GM12878 (cell line): ENCODE measurements at regions of chr2 and their contacts with region 1.

Region 1: DNA sequence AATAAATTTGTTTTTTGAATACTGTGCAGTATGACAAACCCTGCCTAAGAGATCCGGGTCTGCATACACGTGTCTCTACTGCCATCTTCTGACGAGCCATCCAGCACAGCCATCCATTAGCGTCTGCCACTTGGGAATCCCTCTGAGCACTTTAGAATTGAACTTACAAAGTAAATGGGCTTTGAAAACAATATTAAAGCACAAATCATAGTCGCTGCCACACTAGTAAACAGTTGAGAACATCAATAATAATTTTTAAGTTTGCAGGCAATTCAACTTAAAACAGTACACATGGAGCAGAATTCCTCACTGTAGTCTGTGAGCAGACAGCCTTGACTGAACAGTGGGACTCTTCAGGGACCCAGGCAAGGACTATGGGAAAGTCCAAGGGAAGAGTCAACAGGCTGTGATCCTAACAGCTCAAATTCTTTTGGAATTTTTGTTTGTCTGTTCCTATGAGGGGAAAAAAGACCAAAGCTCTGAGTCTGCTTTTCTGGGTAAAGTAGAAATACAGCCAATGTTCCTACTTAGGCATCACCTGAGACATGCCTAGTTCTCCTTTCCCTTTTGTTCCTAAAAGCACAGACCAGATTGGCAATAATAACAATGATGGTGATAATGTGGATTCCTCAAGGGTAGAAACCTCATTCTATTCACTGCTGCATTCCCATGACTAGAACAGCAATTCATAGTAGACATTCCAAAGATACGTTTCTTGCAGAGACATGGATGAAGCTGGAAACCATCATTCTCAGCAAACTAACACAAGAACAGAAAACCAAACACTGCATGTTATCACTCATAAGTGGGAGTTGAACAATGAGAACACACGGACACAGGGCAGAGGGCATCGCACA is 92.9 kb downstream of the MREG start:
- DNase-seq: no peak
- ATAC-seq: peak; percentile 75
- H3K4me3 ChIP-seq: no peak overlapping the region
- H3K27ac ChIP-seq: no peak overlapping the region
- H3K4me1 ChIP-seq: peaks cover 25% of the 10 kb centered on the region
- H3K27me3 ChIP-seq: no peaks in the 10 kb centered on the region
- CTCF ChIP-seq: peak; percentile 89 to 93 (median 91); a peak in 5 of 6 replicates
- EP300 ChIP-seq: no peak
- POLR2A ChIP-seq: no peak
- RAD21 ChIP-seq: peak; percentile 95

Region 2: GRCh38 chr2:214960677-214961076 is 959.8 kb before region 1 on chr2:
- CTCF ChIA-PET with region 1: interaction called, 6 read pairs
- POLR2A ChIA-PET with region 1: interaction called, 3 read pairs
- RAD21 ChIA-PET with region 1: interaction called, 5 read pairs
- SMC1A ChIA-PET with region 1: interaction called, 3 read pairs
- in situ Hi-C with region 1: no loop called
- intact Hi-C with region 1: loop called (anchors 2 kb)
- DNase-seq: no peak
- ATAC-seq: peak; percentile 29; the same call in 1 of the 3 replicates
- H3K4me3 ChIP-seq: no peak overlapping the region
- H3K27ac ChIP-seq: no peak overlapping the region; the same call in 1 of the 2 replicates
- H3K4me1 ChIP-seq: no peaks in the 10 kb centered on the region
- H3K27me3 ChIP-seq: no peaks in the 10 kb centered on the region
- CTCF ChIP-seq: peak in 1 of 3 experiments; percentile 14; a peak in 2 of 6 replicates
- EP300 ChIP-seq: no peak
- POLR2A ChIP-seq: no peak
- RAD21 ChIP-seq: no peak

Region 3: GRCh38 chr2:215454519-215455246 is 465.8 kb before region 1 on chr2:
- CTCF ChIA-PET with region 1: interaction called, 14 read pairs
- POLR2A ChIA-PET with region 1: no interaction called
- RAD21 ChIA-PET with region 1: interaction called, 6 read pairs
- SMC1A ChIA-PET with region 1: interaction called, 30 read pairs
- in situ Hi-C with region 1: loop called (anchors 25 kb)
- intact Hi-C with region 1: loop called (anchors 2 kb)
- DNase-seq: no peak
- ATAC-seq: peak; percentile 67
- H3K4me3 ChIP-seq: no peak overlapping the region
- H3K27ac ChIP-seq: no peak overlapping the region
- H3K4me1 ChIP-seq: no peaks in the 10 kb centered on the region
- H3K27me3 ChIP-seq: no peaks in the 10 kb centered on the region
- CTCF ChIP-seq: peak; percentile 71 to 81 (median 71)
- EP300 ChIP-seq: no peak
- POLR2A ChIP-seq: no peak
- RAD21 ChIP-seq: peak; percentile 77

Region 4: DNA sequence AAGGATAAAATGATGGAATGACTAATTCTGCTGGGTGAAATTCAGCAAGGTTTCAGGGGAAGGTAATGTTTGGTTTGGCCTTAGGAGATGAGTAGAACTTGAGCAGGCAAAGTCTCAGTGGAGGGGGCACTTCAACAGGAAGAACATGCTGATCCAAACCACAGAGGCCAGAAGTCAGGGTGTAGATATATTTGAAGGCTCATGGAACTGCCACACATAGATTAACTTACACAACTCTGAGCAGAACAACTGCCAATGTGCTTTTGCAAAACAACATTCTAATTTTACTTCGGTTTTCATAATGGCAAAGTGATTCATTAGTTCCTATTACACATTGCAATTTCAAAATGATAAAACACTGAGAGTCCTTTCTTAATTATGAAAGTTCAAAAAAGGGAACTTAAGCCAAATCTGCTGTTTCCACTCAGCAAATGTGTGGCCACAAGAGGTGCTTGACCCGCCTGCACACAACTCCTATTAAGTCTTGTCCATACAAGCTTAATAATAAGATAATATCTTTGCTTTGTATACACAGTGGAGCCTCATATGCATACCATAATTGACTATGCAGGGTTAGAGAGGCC is 191.9 kb before region 1 on chr2:
- CTCF ChIA-PET with region 1: interaction called, 3 read pairs
- POLR2A ChIA-PET with region 1: no interaction called
- RAD21 ChIA-PET with region 1: interaction called, 4 read pairs
- SMC1A ChIA-PET with region 1: interaction called, 7 read pairs
- in situ Hi-C with region 1: no loop called
- intact Hi-C with region 1: loop called (anchors 5 kb)
- DNase-seq: peak; percentile 35
- ATAC-seq: peak; percentile 90
- H3K4me3 ChIP-seq: no peak overlapping the region
- H3K27ac ChIP-seq: no peak overlapping the region
- H3K4me1 ChIP-seq: 0 out of 2 replicates have a peak, but pooled peaks cover 6% of the 10 kb centered on the region
- H3K27me3 ChIP-seq: no peaks in the 10 kb centered on the region
- CTCF ChIP-seq: 0 out of 6 replicates have a peak, but pooled peaks of 1 of the 3 experiments have one; percentile 4
- EP300 ChIP-seq: peak in 1 of 2 experiments; percentile 20; a peak in 1 of 4 replicates
- POLR2A ChIP-seq: no peak
- RAD21 ChIP-seq: no peak

Region 5: GRCh38 chr2:215828517-215829184 is 91.8 kb before region 1 on chr2:
- CTCF ChIA-PET with region 1: interaction called, 12 read pairs
- POLR2A ChIA-PET with region 1: no interaction called
- RAD21 ChIA-PET with region 1: interaction called, 13 read pairs
- SMC1A ChIA-PET with region 1: interaction called, 7 read pairs
- in situ Hi-C with region 1: no loop called
- intact Hi-C with region 1: loop called (anchors 2 kb)
- DNase-seq: no peak
- ATAC-seq: peak; percentile 80
- H3K4me3 ChIP-seq: no peak overlapping the region
- H3K27ac ChIP-seq: no peak overlapping the region
- H3K4me1 ChIP-seq: peaks cover 5% of the 10 kb centered on the region
- H3K27me3 ChIP-seq: no peaks in the 10 kb centered on the region
- CTCF ChIP-seq: peak; percentile 54 to 73 (median 68)
- EP300 ChIP-seq: no peak
- POLR2A ChIP-seq: no peak
- RAD21 ChIP-seq: peak; percentile 80

Region 6: GRCh38 chr2:215931256-215931903 is 10.9 kb after region 1 on chr2:
- CTCF ChIA-PET with region 1: interaction called, 34 read pairs
- POLR2A ChIA-PET with region 1: interaction called, 4 read pairs
- RAD21 ChIA-PET with region 1: interaction called, 9 read pairs
- SMC1A ChIA-PET with region 1: interaction called, 6 read pairs
- in situ Hi-C with region 1: no loop called
- intact Hi-C with region 1: no loop called
- DNase-seq: no peak
- ATAC-seq: peak; percentile 97
- H3K4me3 ChIP-seq: no peak overlapping the region
- H3K27ac ChIP-seq: no peak overlapping the region
- H3K4me1 ChIP-seq: peaks cover 4% of the 10 kb centered on the region; the same call in 1 of the 2 replicates
- H3K27me3 ChIP-seq: no peaks in the 10 kb centered on the region
- CTCF ChIP-seq: peak; percentile 82 to 96 (median 93)
- EP300 ChIP-seq: no peak
- POLR2A ChIP-seq: no peak
- RAD21 ChIP-seq: peak; percentile 96

Region 7: DNA sequence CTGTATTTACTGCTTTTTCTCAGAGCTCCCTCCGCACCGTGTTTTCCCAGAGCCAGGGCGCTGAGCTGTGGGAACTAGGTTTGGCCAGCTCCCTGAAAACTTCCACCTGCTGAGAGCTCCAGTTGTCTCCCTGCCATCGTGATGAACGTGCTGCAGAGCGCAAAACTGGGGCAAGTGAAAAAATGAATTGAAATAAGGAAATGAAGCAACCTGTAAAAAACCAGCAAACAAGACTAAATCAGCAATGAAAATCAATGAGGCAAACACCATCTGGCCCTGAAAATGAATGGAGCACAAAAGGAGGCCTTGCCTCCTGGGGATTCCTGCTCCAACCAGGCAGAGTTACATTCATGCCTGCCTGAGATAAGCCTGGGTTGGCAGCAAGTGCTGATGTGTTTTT is 321.9 kb after region 1 on chr2:
- CTCF ChIA-PET with region 1: no interaction called
- POLR2A ChIA-PET with region 1: no interaction called
- RAD21 ChIA-PET with region 1: no interaction called
- SMC1A ChIA-PET with region 1: no interaction called
- in situ Hi-C with region 1: no loop called
- intact Hi-C with region 1: no loop called
- DNase-seq: no peak
- ATAC-seq: no peak
- H3K4me3 ChIP-seq: no peak overlapping the region
- H3K27ac ChIP-seq: no peak overlapping the region
- H3K4me1 ChIP-seq: no peaks in the 10 kb centered on the region
- H3K27me3 ChIP-seq: no peaks in the 10 kb centered on the region
- CTCF ChIP-seq: no peak
- EP300 ChIP-seq: no peak
- POLR2A ChIP-seq: no peak
- RAD21 ChIP-seq: no peak